CD8-positive, alpha-beta memory T cell (primary cell): ENCODE measurements at regions of chr18 and their contacts with region 1.

Region 1: GRCh38 chr18:32018331-32019250 is at the start of gene RNF125:
- DNase-seq: peak; percentile 77 to 97 (median 92)
- H3K4me3 ChIP-seq: peak within 1 kb of the TSS; percentile 97
- H3K4me3 Mint-ChIP-seq: peak within 1 kb of the TSS; percentile 87 to 100 (median 98)
- H3K27ac ChIP-seq: peak within 1 kb of the TSS; percentile 89
- H3K27ac Mint-ChIP-seq: peak within 1 kb of the TSS; percentile 82 to 99 (median 97)
- H3K4me1 ChIP-seq: peaks cover 44% of the 10 kb centered on the region
- H3K4me1 Mint-ChIP-seq: peaks cover 51 to 67% (median 61%) of the 10 kb centered on the region in 3 donors
- H3K27me3 ChIP-seq: no peaks in the 10 kb centered on the region
- H3K27me3 Mint-ChIP-seq: peaks cover 0 to 9% of the 10 kb centered on the region in 2 donors
- total RNA-seq, gene RNF125: 41.3 to 42.8 TPM

Region 2: GRCh38 chr18:31901063-31901462 is 117.5 kb before region 1 on chr18:
- CTCF ChIA-PET with region 1: no interaction called
- POLR2A ChIA-PET with region 1: no interaction called
- DNase-seq: no peak
- H3K4me3 ChIP-seq: no peak overlapping the region
- H3K4me3 Mint-ChIP-seq: no peak overlapping the region
- H3K27ac ChIP-seq: no peak overlapping the region
- H3K27ac Mint-ChIP-seq: no peak overlapping the region
- H3K4me1 ChIP-seq: no peaks in the 10 kb centered on the region
- H3K4me1 Mint-ChIP-seq: peaks cover 0 to 4% (median 2%) of the 10 kb centered on the region in 3 donors
- H3K27me3 ChIP-seq: no peaks in the 10 kb centered on the region
- H3K27me3 Mint-ChIP-seq: no peaks in the 10 kb centered on the region

Region 3: DNA sequence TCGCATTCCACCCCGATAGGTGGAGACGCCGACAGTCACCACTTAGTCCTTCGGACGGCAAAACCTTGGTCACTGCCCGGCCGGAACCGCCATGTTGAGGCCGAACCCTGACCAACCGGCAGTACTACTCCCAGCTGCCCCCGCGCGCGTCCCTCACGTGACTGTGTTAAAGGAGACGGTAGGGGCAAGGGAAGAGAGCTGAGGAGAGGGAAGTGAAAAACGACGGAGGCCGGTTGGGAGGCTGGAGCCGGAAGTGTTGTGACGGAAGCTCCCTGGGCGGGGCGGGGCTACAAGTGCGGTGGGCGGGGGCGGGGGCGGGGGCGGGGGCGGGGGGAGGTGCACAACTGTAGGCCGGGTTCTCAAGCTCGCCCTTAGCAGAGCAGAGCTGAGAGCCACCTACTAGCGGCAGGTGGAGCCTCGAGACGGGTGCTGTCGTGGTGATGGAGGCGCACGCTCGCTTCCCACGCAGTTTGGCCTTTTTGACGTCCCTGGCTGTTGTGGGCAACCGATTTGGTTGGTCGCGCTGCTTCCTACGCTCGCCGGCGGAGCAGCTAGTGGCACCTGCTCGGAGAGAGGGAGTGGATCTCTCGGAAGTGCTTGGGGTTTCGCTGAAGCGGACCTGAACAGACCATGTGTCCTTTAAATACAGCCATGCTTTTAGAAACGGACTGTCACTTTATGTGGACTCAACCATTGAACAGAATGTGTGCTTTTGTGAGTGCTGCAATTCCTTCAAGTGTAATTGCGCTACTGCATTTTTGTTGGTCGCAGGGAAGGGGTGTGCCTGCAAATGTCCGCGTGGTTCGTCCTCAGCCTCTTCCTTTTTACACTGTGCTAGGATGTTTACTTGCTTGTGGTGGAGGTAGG is 75.4 kb before region 1 on chr18 and contains the start of gene TRAPPC8:
- CTCF ChIA-PET with region 1: interaction called, 38 read pairs
- POLR2A ChIA-PET with region 1: interaction called, 80 read pairs
- DNase-seq: peak; percentile 86 to 95 (median 93)
- H3K4me3 ChIP-seq: peak within 1 kb of the TSS; percentile 90
- H3K4me3 Mint-ChIP-seq: peak within 1 kb of the TSS; percentile 97 to 100 (median 99)
- H3K27ac ChIP-seq: peak within 1 kb of the TSS; percentile 95
- H3K27ac Mint-ChIP-seq: peak within 1 kb of the TSS; percentile 95 to 100 (median 100)
- H3K4me1 ChIP-seq: peaks cover 26% of the 10 kb centered on the region
- H3K4me1 Mint-ChIP-seq: peaks cover 45 to 58% (median 56%) of the 10 kb centered on the region in 3 donors
- H3K27me3 ChIP-seq: no peaks in the 10 kb centered on the region
- H3K27me3 Mint-ChIP-seq: no peaks in the 10 kb centered on the region
- total RNA-seq, gene TRAPPC8: 29.2 to 34.8 TPM

Region 4: DNA sequence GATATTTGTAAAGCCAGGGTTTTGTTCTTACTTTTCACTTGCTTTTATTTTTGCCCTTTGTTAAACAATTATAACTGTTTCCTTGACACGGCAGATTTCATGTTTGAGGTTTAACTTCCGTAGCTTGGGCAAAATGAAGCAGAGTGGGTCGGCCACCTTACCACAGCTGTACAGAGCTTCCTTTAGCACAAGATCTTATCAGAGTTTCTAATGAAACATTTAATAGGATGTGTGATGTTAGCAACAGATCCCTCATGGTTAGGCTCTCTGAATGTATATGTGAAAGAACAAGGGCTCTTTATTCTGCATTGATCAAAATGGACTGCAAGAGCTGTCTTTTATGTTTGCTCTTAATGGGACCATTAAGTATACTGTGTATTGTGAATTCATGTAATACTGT is 22.3 kb after region 1 on chr18:
- CTCF ChIA-PET with region 1: interaction called, 29 read pairs
- POLR2A ChIA-PET with region 1: interaction called, 70 read pairs
- DNase-seq: peak; percentile 24 to 76 (median 45)
- H3K4me3 ChIP-seq: peak overlapping the region; percentile 39
- H3K4me3 Mint-ChIP-seq: peak overlapping the region; percentile 25 to 86 (median 70)
- H3K27ac ChIP-seq: no peak overlapping the region
- H3K27ac Mint-ChIP-seq: peak overlapping the region; percentile 17 to 93 (median 76)
- H3K4me1 ChIP-seq: peaks cover 65% of the 10 kb centered on the region
- H3K4me1 Mint-ChIP-seq: peaks cover 59 to 76% (median 72%) of the 10 kb centered on the region in 3 donors
- H3K27me3 ChIP-seq: no peaks in the 10 kb centered on the region
- H3K27me3 Mint-ChIP-seq: peaks cover 0 to 1% of the 10 kb centered on the region in 2 donors

Region 5: GRCh38 chr18:32048507-32049091 is 30.0 kb after region 1 on chr18:
- CTCF ChIA-PET with region 1: interaction called, 16 read pairs
- POLR2A ChIA-PET with region 1: interaction called, 70 read pairs
- DNase-seq: no peak
- H3K4me3 ChIP-seq: peak overlapping the region; percentile 16
- H3K4me3 Mint-ChIP-seq: peak overlapping the region in 6 of 7 donors; percentile 18 to 71 (median 58)
- H3K27ac ChIP-seq: no peak overlapping the region
- H3K27ac Mint-ChIP-seq: peak overlapping the region; percentile 72 to 94 (median 89)
- H3K4me1 ChIP-seq: peaks cover 25% of the 10 kb centered on the region
- H3K4me1 Mint-ChIP-seq: peaks cover 35 to 60% (median 52%) of the 10 kb centered on the region in 3 donors
- H3K27me3 ChIP-seq: no peaks in the 10 kb centered on the region
- H3K27me3 Mint-ChIP-seq: peaks cover 0 to 2% of the 10 kb centered on the region in 2 donors

Region 6: GRCh38 chr18:32072321-32072720 is 53.7 kb after region 1 on chr18:
- CTCF ChIA-PET with region 1: interaction called, 40 read pairs
- POLR2A ChIA-PET with region 1: interaction called, 14 read pairs
- DNase-seq: peak in 1 of 5 donors; percentile 37
- H3K4me3 ChIP-seq: no peak overlapping the region
- H3K4me3 Mint-ChIP-seq: no peak overlapping the region
- H3K27ac ChIP-seq: no peak overlapping the region
- H3K27ac Mint-ChIP-seq: peak overlapping the region in 6 of 8 donors; percentile 12 to 71 (median 37)
- H3K4me1 ChIP-seq: no peaks in the 10 kb centered on the region
- H3K4me1 Mint-ChIP-seq: peaks cover 6 to 30% (median 17%) of the 10 kb centered on the region in 3 donors
- H3K27me3 ChIP-seq: no peaks in the 10 kb centered on the region
- H3K27me3 Mint-ChIP-seq: no peaks in the 10 kb centered on the region

Region 7: GRCh38 chr18:32086861-32087260 is 68.3 kb after region 1 on chr18:
- CTCF ChIA-PET with region 1: interaction called, 38 read pairs
- POLR2A ChIA-PET with region 1: interaction called, 66 read pairs
- DNase-seq: no peak
- H3K4me3 ChIP-seq: no peak overlapping the region
- H3K4me3 Mint-ChIP-seq: peak overlapping the region in 2 of 7 donors; percentile 12 to 13
- H3K27ac ChIP-seq: no peak overlapping the region
- H3K27ac Mint-ChIP-seq: peak overlapping the region in 5 of 8 donors; percentile 29 to 86 (median 70)
- H3K4me1 ChIP-seq: peaks cover 26% of the 10 kb centered on the region
- H3K4me1 Mint-ChIP-seq: peaks cover 42 to 55% (median 54%) of the 10 kb centered on the region in 3 donors
- H3K27me3 ChIP-seq: no peaks in the 10 kb centered on the region
- H3K27me3 Mint-ChIP-seq: peaks cover 0 to 8% of the 10 kb centered on the region in 2 donors

Region 8: DNA sequence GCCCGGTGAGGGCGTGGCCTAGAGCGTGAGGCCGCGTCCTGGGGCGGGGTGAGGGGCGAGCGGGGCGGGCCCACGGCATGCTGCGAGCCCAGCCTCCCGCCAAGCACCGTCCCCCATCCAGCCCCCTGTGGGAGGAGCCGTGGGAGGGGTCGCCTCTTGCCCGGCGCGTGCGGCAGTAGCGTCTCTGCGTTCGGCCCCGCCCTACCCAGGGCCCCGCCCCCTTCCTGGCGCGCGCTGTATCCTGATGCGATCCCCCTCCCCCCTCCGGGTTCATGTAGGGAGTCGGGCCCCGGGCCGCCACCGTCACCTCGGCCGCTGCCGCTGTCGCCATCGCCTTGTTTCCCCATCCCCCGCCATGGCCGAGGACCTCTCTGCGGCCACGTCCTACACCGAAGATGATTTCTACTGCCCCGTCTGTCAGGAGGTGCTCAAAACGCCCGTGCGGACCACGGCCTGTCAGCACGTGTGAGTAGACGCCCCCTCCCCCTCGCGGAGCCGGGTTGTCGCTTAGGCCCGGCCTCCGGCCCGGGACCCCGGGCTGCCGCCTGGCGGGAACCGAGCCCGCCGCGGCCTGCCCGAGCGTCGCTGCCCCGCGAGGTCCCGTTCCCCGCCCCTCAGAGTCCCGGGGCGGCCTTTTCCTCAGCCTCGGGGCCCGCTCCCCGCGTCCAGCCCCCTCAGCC is 74.0 kb after region 1 on chr18:
- CTCF ChIA-PET with region 1: interaction called, 38 read pairs
- POLR2A ChIA-PET with region 1: interaction called, 66 read pairs
- DNase-seq: peak; percentile 99 to 100 (median 99)
- H3K4me3 ChIP-seq: peak overlapping the region; percentile 86
- H3K4me3 Mint-ChIP-seq: peak overlapping the region; percentile 93 to 100 (median 97)
- H3K27ac ChIP-seq: peak overlapping the region; percentile 93
- H3K27ac Mint-ChIP-seq: peak overlapping the region; percentile 90 to 99 (median 98)
- H3K4me1 ChIP-seq: peaks cover 41% of the 10 kb centered on the region
- H3K4me1 Mint-ChIP-seq: peaks cover 47 to 57% (median 53%) of the 10 kb centered on the region in 3 donors
- H3K27me3 ChIP-seq: no peaks in the 10 kb centered on the region
- H3K27me3 Mint-ChIP-seq: peaks cover 0 to 2% of the 10 kb centered on the region in 2 donors